Right ventricle myocardium superior (tissue), 1 donor: ENCODE measurements at regions of chr5 and their contacts with region 1.

Region 1: GRCh38 chr5:96978812-96979449 is 43.1 kb downstream of the LNPEP start:
- DNase-seq: no peak
- ATAC-seq: no peak

Region 2: GRCh38 chr5:96934708-96935558 is 44.0 kb before region 1 on chr5:
- intact Hi-C with region 1: loop called (anchors 5 kb)
- DNase-seq: peak; percentile 97
- ATAC-seq: peak; percentile 90